ENCODE measurements at regions of chr3 and their contacts with region 1.

Region 1: GRCh38 chr3:71389911-71390573 is 193.5 kb downstream of the FOXP1 start:
- DNase-seq: peak; percentile 59
- H3K4me3 ChIP-seq: peak overlapping the region; percentile 46
- H3K27ac ChIP-seq: peak overlapping the region; percentile 90
- H3K4me1 ChIP-seq: peaks cover 78% of the 10 kb centered on the region
- CTCF ChIP-seq: no peak

Region 2: GRCh38 chr3:71130471-71131374 is 259.3 kb before region 1 on chr3:
- CTCF ChIA-PET with region 1: no interaction called
- POLR2A ChIA-PET with region 1: interaction called, 7 read pairs
- intact Hi-C with region 1: loop called (anchors 1 kb)
- DNase-seq: peak; percentile 84
- H3K4me3 ChIP-seq: peak overlapping the region; percentile 85
- H3K27ac ChIP-seq: peak overlapping the region; percentile 96
- H3K4me1 ChIP-seq: peaks cover 72% of the 10 kb centered on the region
- CTCF ChIP-seq: no peak

Region 3: DNA sequence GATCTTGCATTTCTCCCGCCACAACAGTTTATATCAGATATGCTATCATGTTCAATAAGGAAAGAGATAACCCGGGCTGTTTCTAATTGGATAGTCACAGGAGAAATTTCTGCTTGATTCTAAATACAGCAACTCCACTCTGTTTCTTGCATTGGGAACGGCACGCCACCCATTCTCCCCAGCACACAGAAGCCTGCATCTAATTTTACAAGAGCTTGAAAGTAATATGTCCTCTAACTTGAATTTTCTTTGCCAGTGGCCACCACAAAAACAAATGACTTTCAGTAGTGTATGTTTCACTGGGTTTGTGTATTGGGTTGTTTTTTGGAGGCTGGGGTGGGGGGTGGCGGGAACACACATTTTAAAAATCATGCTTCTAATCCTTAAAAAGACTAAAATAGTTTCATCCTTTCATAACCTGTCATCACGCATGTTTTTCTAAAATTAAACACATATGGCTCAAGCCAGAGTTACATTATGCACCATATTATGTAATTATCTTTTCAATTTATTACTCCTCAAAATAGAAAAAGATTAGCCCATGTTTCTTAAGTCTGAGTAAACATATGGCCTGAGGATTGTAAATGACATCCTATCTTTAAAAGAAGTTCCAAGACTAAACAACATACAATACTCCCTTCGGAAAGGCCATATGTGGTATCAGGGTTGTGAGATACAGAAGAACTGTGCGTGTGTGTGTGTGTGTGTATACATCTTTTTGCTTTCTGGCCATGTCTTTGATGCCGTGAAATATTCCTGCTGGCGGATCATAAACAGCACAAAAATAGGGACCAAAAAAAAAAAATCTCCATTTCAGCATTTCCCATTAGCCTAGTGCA is 17.1 kb after region 1 on chr3:
- CTCF ChIA-PET with region 1: no interaction called
- POLR2A ChIA-PET with region 1: interaction called, 14 read pairs
- intact Hi-C with region 1: no loop called
- DNase-seq: no peak
- H3K4me3 ChIP-seq: no peak overlapping the region
- H3K27ac ChIP-seq: no peak overlapping the region
- H3K4me1 ChIP-seq: peaks cover 51% of the 10 kb centered on the region
- CTCF ChIP-seq: no peak

Region 4: DNA sequence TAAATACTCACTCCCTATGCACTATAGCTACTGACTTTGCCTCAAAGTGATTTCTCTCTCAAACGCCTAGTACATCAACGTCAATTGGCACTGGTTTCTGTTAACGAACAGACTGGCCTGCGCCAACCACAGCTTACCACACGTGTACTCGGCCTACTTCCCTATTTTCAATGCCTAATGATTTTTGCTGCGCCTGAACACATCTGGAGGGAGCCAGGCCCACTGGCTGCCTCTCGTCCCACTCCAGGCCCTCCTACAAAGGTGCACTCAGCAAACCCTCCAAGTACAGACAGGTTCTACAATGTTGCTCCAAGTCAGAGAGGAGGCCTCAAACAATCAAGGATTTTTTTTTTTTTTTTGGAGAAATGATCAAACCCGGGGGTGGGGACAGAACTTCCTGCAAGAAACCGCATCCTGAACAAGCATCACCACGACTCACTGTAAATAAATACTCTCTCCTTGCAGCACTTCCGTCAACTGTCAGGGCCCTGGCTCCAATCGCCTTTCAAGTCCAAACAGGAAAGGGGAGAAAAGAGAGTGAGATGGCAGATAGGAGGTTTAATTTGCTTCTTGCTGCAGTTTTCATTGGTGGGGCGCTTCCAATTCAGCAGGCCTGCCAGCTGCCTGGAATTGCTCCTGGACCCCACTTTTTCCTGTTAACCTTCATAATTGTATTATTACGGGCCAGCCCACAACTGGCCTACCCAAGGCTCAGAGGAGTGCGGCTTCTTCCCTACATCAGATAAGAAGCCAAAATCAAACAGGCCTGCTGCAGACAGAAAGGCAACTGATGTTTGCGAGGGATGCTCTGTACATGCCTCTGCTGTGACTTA is 54.2 kb after region 1 on chr3:
- CTCF ChIA-PET with region 1: interaction called, 4 read pairs
- POLR2A ChIA-PET with region 1: interaction called, 12 read pairs
- intact Hi-C with region 1: loop called (anchors 1 kb)
- DNase-seq: peak; percentile 94
- H3K4me3 ChIP-seq: peak overlapping the region; percentile 61
- H3K27ac ChIP-seq: peak overlapping the region; percentile 99
- H3K4me1 ChIP-seq: peaks cover 98% of the 10 kb centered on the region
- CTCF ChIP-seq: no peak

Region 5: GRCh38 chr3:71461749-71462465 is 71.9 kb after region 1 on chr3:
- CTCF ChIA-PET with region 1: no interaction called
- POLR2A ChIA-PET with region 1: no interaction called
- intact Hi-C with region 1: no loop called
- DNase-seq: no peak
- H3K4me3 ChIP-seq: no peak overlapping the region
- H3K27ac ChIP-seq: no peak overlapping the region
- H3K4me1 ChIP-seq: peaks cover 27% of the 10 kb centered on the region
- CTCF ChIP-seq: no peak

Region 6: DNA sequence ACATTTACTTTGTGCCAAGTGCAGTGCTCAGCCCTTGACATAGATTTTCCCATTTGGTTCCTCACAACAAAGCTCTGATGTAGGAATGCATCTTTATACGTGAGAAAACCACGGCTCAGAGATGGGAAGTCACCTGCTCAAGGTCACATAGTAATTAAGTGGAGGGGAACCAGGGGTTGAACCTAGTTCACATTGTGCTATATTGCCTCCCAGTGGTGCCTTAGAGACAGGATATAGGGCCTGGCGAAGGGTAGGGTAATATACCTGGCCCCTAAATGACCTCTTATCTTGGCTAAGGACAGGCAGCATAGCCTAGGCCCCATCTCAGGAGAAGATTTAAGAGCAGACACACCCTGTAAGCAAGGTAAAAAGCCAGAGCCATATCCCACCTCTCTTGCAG is 122.0 kb after region 1 on chr3:
- CTCF ChIA-PET with region 1: no interaction called
- POLR2A ChIA-PET with region 1: interaction called, 3 read pairs
- intact Hi-C with region 1: loop called (anchors 5 kb)
- DNase-seq: peak; percentile 77
- H3K4me3 ChIP-seq: no peak overlapping the region
- H3K27ac ChIP-seq: peak overlapping the region; percentile 14
- H3K4me1 ChIP-seq: peaks cover 38% of the 10 kb centered on the region
- CTCF ChIP-seq: peak; percentile 83